Testis (tissue), 5 donors: ENCODE measurements at regions of chr3 and their contacts with region 1.

Region 1: DNA sequence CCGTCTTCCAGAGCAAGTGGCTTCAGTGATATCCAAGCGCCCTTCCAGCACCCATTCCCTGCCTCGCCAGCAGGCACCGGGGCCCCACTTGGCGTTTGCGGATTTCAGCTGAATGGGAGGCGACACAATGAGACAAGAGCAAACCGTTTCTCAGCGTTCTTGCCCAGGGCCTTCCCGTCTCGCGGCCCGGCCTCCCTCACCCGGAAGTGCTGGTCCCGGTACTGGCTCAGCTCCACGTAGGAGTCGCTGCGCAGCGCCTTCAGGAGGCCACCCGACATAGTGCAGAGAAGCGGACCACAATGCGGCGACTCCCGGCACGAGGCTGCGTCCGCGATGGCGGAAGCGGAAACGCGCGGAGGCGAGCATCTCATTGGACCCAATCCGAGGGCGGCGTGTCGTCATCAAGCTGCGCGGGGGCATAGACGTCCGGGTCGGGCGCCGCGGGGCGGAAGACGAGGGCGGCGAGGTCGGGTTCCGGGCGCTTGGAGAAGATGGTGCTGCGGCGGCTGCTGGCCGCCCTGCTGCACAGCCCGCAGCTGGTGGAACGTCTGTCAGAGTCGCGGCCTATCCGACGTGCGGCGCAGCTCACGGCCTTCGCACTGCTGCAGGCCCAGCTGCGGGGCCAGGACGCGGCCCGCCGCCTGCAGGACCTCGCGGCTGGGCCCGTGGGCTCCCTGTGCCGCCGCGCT is at the start of gene NCBP2:
- DNase-seq: peak; percentile 97
- H3K4me3 ChIP-seq: peak within 1 kb of the TSS; percentile 88 to 97
- H3K27ac ChIP-seq: peak within 1 kb of the TSS; percentile 76 to 90
- H3K4me1 ChIP-seq: peaks cover 14% of the 10 kb centered on the region
- H3K27me3 ChIP-seq: no peaks in the 10 kb centered on the region
- CTCF ChIP-seq: peak; percentile 46 to 76 (median 59)
- POLR2A ChIP-seq: no peak
- total RNA-seq, gene NCBP2: 30.6 to 40.8 TPM

Region 2: DNA sequence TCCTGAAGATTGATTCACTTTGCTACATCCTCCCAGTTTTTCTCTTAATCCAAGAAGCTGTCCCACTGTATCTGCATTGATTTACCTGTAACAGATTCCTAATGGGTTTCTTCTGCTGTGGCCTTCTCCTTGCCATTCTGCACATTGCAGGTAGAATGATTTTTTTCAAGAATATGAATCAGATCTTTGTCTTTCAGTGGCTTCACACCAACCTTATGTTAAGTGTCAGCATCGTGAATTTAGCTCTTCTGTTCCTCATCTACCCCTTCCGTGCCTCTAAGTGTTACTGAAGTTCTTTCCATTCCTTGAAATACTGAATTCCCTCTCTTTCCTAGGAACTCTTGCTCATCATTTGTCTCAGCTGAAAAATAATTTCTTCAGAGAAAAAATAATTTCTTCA is 67.1 kb before region 1 on chr3:
- intact Hi-C with region 1: loop called (anchors 5 kb)
- DNase-seq: no peak
- H3K4me3 ChIP-seq: no peak overlapping the region
- H3K27ac ChIP-seq: no peak overlapping the region
- H3K4me1 ChIP-seq: no peaks in the 10 kb centered on the region
- H3K27me3 ChIP-seq: no peaks in the 10 kb centered on the region
- CTCF ChIP-seq: no peak
- POLR2A ChIP-seq: no peak

Region 3: GRCh38 chr3:197038679-197039462 is 96.5 kb after region 1 on chr3:
- intact Hi-C with region 1: no loop called
- DNase-seq: no peak
- H3K4me3 ChIP-seq: no peak overlapping the region
- H3K27ac ChIP-seq: no peak overlapping the region
- H3K4me1 ChIP-seq: no peaks in the 10 kb centered on the region
- H3K27me3 ChIP-seq: no peaks in the 10 kb centered on the region
- CTCF ChIP-seq: no peak
- POLR2A ChIP-seq: no peak

Region 4: DNA sequence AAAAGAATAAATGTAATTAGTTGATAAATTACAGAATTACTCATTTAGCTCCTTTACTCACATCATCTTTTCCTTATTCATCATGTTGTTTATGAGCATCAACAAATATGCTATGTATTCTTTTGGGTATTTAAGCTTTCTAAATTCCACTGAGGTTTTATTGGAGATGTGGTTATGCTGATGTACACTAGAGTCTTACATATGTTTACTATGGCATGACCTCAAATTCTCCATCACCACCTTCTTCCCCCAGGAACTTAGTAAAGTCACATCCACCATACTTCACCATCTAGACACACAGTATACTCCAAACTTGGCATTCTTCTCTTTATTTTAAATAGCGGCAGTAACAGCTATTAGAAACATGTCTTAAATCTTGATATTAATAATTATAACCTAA is 161.4 kb after region 1 on chr3:
- intact Hi-C with region 1: no loop called
- DNase-seq: no peak
- H3K4me3 ChIP-seq: no peak overlapping the region
- H3K27ac ChIP-seq: no peak overlapping the region
- H3K4me1 ChIP-seq: no peaks in the 10 kb centered on the region
- H3K27me3 ChIP-seq: no peaks in the 10 kb centered on the region
- CTCF ChIP-seq: no peak
- POLR2A ChIP-seq: no peak

Region 5: GRCh38 chr3:197125636-197126035 is 183.3 kb after region 1 on chr3:
- intact Hi-C with region 1: no loop called
- DNase-seq: no peak
- H3K4me3 ChIP-seq: no peak overlapping the region
- H3K27ac ChIP-seq: no peak overlapping the region
- H3K4me1 ChIP-seq: no peaks in the 10 kb centered on the region
- H3K27me3 ChIP-seq: no peaks in the 10 kb centered on the region
- CTCF ChIP-seq: no peak
- POLR2A ChIP-seq: no peak

Region 6: DNA sequence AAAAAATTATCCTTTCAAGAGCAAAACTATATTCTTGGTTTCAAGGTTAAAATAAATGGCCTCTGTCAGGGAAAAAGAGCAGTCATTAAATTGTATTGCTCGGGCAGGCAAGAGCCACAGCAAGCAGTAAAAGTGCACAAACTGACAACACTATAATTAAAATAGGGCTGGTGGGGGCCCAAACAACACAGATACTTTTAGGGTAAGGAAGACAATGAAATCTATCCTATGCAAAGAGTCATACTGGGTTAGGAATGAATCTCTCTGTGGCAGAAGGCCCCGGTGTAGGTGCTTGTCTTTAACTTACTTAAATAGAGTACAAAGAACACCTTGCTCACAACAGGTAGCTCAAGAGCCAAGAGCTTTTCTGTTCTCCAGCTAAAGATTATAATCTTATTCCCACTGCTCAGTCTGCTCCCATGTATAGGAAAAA is 261.4 kb after region 1 on chr3:
- intact Hi-C with region 1: no loop called
- DNase-seq: no peak
- H3K4me3 ChIP-seq: no peak overlapping the region
- H3K27ac ChIP-seq: no peak overlapping the region
- H3K4me1 ChIP-seq: no peaks in the 10 kb centered on the region
- H3K27me3 ChIP-seq: no peaks in the 10 kb centered on the region
- CTCF ChIP-seq: no peak
- POLR2A ChIP-seq: no peak